Heart left ventricle (tissue), 16 donors: ENCODE measurements at regions of chr10 and their contacts with region 1.

Region 1: GRCh38 chr10:20898866-20899535 is 1.9 kb upstream of the NEBL start:
- DNase-seq: no peak
- ATAC-seq: no peak
- H3K4me3 ChIP-seq: no peak overlapping the region
- H3K27ac ChIP-seq: peak overlapping the region in 8 of 12 donors; percentile 18 to 95 (median 90)
- H3K4me1 ChIP-seq: peaks cover 0 to 12% (median 0%) of the 10 kb centered on the region in 12 donors
- H3K27me3 ChIP-seq: no peaks in the 10 kb centered on the region
- CTCF ChIP-seq: no peak
- POLR2A ChIP-seq: no peak

Region 2: DNA sequence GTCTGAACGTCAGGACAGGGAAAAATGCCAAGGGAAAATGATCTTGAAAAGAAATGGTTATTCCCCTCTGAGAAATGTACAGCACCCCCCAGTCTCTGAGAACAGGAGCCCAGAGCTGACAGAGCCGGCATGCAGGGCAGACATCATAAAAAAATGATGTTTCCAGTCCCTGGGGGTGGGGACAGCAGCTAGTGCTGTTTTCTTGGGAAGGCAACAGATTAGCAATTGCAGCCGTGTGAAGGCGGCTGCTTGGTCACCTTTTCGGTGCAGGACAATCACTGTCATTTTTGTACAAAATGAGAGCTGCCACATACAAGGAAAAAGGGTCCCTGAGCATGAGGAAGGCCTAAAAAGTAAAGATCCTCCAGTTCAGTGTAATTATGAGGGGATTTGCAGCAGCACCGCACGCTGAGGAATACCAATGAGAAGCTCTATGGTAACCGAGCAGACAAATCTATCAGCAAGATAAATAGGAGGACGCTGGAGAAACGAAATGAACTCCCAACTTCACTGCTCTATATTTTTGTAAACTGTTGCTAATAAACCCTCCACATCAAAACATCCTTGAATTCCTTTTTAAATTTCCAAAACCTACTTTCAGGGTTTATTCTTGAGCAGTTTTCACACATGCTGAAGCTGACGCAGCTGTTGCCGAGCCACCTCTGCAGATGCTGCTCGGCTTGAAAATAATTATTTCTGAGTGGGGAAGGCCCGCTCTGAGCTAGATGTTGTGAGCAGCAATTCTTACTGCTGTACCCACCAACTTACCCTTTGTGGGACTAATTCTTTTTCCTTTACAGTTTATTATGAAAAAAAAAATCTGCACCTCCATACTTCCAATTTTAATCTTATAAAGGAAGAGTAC is 96.4 kb after region 1 on chr10:
- intact Hi-C with region 1: loop called in 2 of 10 experiments (anchors 5 to 10 kb)
- DNase-seq: no peak
- ATAC-seq: peak in 2 of 4 donors; percentile 32 to 39
- H3K4me3 ChIP-seq: peak overlapping the region in 9 of 12 donors; percentile 15 to 40 (median 30)
- H3K27ac ChIP-seq: no peak overlapping the region
- H3K4me1 ChIP-seq: peaks cover 0 to 11% (median 0%) of the 10 kb centered on the region in 12 donors
- H3K27me3 ChIP-seq: no peaks in the 10 kb centered on the region
- CTCF ChIP-seq: no peak
- POLR2A ChIP-seq: no peak

Region 3: DNA sequence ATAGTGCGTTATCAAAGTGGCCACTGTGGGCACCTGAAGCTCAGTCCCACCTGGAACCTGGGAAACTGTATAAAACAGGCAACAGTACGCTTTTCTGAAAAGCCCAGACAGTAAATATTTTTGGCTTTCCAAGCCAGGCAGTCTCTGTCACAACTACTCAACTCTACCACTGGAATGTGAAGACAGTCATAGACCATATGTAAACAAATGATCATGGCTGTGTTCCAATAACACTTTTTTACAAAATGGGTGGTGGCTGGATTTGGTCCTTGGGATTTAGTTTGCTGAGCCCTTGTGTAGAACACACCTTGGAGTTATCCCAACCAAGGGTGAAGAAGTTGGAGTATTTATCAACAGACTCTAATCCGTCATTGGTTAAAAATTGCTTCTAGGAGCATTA is 366.6 kb after region 1 on chr10:
- intact Hi-C with region 1: no loop called
- DNase-seq: no peak
- ATAC-seq: no peak
- H3K4me3 ChIP-seq: no peak overlapping the region
- H3K27ac ChIP-seq: no peak overlapping the region
- H3K4me1 ChIP-seq: no peaks in the 10 kb centered on the region
- H3K27me3 ChIP-seq: no peaks in the 10 kb centered on the region
- CTCF ChIP-seq: no peak
- POLR2A ChIP-seq: no peak